Activated CD8-positive, alpha-beta memory T cell treated with anti-CD3 and anti-CD28 coated beads, Interleukin-2, amount 10 ng/mL, durations not matched to agents 7 days and 5 days (primary cell): ENCODE measurements at regions of chr6 and their contacts with region 1.

Region 1: GRCh38 chr6:90458353-90459224 is 128.3 kb downstream of the MAP3K7 start:
- DNase-seq: peak; percentile 91
- ATAC-seq: peak; percentile 91
- H3K4me3 Mint-ChIP-seq: peak overlapping the region; percentile 65
- H3K27ac Mint-ChIP-seq: peak overlapping the region; percentile 93
- H3K4me1 Mint-ChIP-seq: peaks cover 70% of the 10 kb centered on the region
- H3K27me3 Mint-ChIP-seq: no peaks in the 10 kb centered on the region

Region 2: DNA sequence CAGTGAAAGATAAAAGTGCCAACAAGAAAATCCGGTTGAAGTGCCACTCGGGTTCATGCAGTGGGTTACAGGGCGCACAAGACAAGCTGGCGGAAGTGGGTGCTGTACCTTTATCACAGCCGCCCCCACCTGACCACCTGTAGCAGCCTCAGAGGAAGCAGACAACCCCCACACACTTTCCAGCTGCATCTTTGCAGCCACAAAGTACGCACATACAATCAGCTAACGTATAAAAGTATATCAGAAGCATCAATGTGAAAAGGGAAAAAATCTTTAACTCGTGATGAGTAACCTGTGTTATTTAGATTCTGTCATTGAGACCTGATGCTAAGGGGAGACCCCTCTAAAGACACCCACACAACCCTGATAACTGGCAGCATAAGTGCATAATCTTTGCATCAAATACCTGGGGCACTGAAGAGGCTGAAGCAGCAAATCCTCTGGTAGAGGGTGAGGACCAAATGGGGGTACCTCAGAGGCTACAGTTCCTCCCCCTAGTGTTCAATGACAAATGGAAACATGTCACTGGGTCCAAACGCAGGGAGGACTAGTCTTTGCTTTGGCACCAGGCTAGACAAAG is 184.0 kb before region 1 on chr6:
- CTCF ChIA-PET with region 1: no interaction called
- DNase-seq: peak; percentile 91
- ATAC-seq: peak; percentile 90
- H3K4me3 Mint-ChIP-seq: peak overlapping the region; percentile 46
- H3K27ac Mint-ChIP-seq: peak overlapping the region; percentile 85
- H3K4me1 Mint-ChIP-seq: peaks cover 58% of the 10 kb centered on the region
- H3K27me3 Mint-ChIP-seq: peaks cover 5% of the 10 kb centered on the region

Region 3: GRCh38 chr6:90472744-90473143 is 14.2 kb after region 1 on chr6:
- CTCF ChIA-PET with region 1: interaction called, 46 read pairs
- DNase-seq: peak; percentile 86
- ATAC-seq: peak; percentile 42
- H3K4me3 Mint-ChIP-seq: peak overlapping the region; percentile 70
- H3K27ac Mint-ChIP-seq: peak overlapping the region; percentile 88
- H3K4me1 Mint-ChIP-seq: peaks cover 90% of the 10 kb centered on the region
- H3K27me3 Mint-ChIP-seq: peaks cover 6% of the 10 kb centered on the region